ENCODE measurements at regions of chr4 and their contacts with region 1.

Region 1: GRCh38 chr4:184406958-184407391 is 67.4 kb downstream of the IRF2 start:
- H3K4me3 Mint-ChIP-seq: peak overlapping the region; percentile 21
- H3K27ac Mint-ChIP-seq: peak overlapping the region; percentile 83
- H3K4me1 Mint-ChIP-seq: peaks cover 61% of the 10 kb centered on the region
- H3K27me3 Mint-ChIP-seq: no peaks in the 10 kb centered on the region

Region 2: DNA sequence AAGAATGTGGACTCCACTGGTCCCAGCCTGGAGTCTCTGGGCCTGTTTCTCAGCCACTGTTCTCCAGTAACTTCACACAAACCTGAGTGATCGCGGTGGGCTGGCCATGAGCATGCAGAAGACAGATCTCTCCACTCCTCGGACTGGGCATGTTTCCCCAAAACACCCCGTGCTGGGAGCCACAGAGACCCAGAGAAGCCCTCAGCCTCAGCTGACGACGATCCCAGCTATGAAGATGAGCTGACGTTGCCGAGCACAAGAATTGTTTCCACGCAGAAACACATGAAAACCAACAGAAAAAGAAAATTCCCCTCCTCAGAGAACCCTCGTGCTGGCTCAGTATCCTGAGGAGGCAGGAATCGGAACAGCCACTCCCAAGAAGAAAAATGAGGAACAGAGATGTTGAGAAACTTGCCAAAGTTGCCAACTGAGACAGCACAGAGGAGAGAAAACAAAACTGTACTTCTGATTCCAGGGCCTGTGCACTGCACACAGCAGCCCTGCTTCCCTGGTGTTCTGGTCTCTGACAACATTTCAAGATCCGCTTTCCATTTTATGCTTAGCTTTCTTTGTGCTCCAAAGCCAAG is 14.1 kb before region 1 on chr4:
- intact Hi-C with region 1: loop called (anchors 2 kb)
- H3K4me3 Mint-ChIP-seq: peak overlapping the region; percentile 69
- H3K27ac Mint-ChIP-seq: peak overlapping the region; percentile 96
- H3K4me1 Mint-ChIP-seq: peaks cover 74% of the 10 kb centered on the region
- H3K27me3 Mint-ChIP-seq: no peaks in the 10 kb centered on the region

Measured in dendritic cell treated with granulocyte-macrophage colony-stimulating factor and Interleukin-4, amounts not matched to agents 40 ng/mL and 50 ng/mL, for 4 days (primary cell).